IMR-90 (cell line): ENCODE measurements at regions of chr16 and their contacts with region 1.

Region 1: GRCh38 chr16:30628627-30629540 is 18.7 kb upstream of the ZNF689 start:
- DNase-seq: peak; percentile 68
- ATAC-seq: peak; percentile 99
- H3K4me3 ChIP-seq: no peak overlapping the region
- H3K27ac ChIP-seq: no peak overlapping the region
- H3K4me1 ChIP-seq: no peaks in the 10 kb centered on the region
- H3K27me3 ChIP-seq: no peaks in the 10 kb centered on the region
- CTCF ChIP-seq: peak; percentile 88
- POLR2A ChIP-seq: no peak
- RAD21 ChIP-seq: peak; percentile 83

Region 2: DNA sequence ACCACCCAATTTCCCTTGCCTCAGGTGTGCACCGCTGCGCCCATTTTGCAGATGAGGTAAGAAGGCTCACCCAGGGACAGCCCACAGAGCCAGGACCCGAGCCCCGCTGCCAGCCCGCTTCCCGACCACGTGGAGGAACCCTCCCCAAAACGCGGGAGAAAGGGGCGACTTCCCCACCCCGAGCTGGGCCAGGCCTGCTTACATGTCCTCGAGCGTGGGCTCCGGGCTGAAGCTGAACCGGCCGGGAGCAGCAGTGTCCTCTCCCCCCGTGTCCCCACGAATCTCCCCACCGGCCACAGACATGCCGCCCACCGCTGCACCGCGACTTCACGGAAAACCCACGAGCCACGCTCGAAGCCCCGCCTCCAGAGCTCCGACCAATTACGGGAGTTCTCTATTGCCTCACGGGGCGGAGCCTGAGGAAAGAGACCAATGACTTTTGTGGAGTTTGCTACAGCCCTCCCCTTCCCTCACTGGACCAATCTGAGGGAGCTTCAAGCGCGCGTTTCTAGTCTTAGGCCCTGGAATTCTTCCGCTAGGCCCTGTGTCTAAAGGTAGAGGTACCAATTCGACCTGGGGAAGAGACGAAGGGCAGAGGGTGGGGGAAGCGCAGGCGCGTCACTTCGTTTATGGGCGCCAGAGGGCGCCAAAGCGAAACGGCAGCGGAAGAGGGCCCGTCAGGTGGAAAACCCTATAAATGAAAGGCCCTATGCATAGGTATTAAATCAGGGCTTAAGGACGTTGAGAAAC is 199.0 kb before region 1 on chr16 and contains the start of gene DCTPP1:
- CTCF ChIA-PET with region 1: interaction called, 3 read pairs
- POLR2A ChIA-PET with region 1: no interaction called
- dilution Hi-C with region 1: no loop called
- in situ Hi-C with region 1: no loop called
- intact Hi-C with region 1: loop called (anchors 1 kb)
- DNase-seq: peak; percentile 98
- ATAC-seq: peak; percentile 100
- H3K4me3 ChIP-seq: peak within 1 kb of the TSS; percentile 64
- H3K27ac ChIP-seq: no peak within 1 kb of the TSS; the same call in 1 of the 2 replicates
- H3K4me1 ChIP-seq: peaks cover 3% of the 10 kb centered on the region; the same call in 1 of the 2 replicates
- H3K27me3 ChIP-seq: peaks cover 5% of the 10 kb centered on the region
- CTCF ChIP-seq: peak; percentile 79
- POLR2A ChIP-seq: no peak
- RAD21 ChIP-seq: peak; percentile 68
- total RNA-seq, gene DCTPP1: 23.3 and 24.9 TPM in 2 replicates

Region 3: DNA sequence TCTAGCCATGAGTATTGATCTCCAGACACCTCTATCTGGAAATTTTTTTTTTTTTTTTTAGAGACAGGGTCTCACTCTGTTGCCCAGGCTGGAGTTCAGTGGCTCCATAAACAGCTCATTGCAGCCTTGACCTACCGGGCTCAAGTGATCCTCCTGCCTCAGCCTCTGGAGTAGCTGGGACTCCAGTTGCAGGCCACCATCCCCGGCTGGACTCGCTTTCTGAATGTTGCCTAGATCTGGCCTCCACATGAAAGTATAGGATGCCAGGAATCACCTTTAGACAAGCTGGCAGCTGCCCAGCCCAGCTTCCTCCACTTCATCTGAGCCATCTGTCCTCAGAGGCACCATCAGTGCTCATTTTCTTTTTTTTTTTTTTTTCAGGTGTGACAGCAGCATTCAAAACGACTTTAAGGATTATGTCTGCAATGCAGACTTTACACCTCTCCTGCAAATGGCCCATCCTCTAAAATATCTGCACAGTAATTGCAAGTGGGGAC is 15.5 kb after region 1 on chr16:
- CTCF ChIA-PET with region 1: no interaction called
- POLR2A ChIA-PET with region 1: no interaction called
- dilution Hi-C with region 1: no loop called
- in situ Hi-C with region 1: no loop called
- intact Hi-C with region 1: no loop called
- DNase-seq: no peak
- ATAC-seq: no peak
- H3K4me3 ChIP-seq: no peak overlapping the region
- H3K27ac ChIP-seq: no peak overlapping the region
- H3K4me1 ChIP-seq: no peaks in the 10 kb centered on the region
- H3K27me3 ChIP-seq: peaks cover 1% of the 10 kb centered on the region; the same call in 1 of the 2 replicates
- CTCF ChIP-seq: no peak
- POLR2A ChIP-seq: no peak
- RAD21 ChIP-seq: no peak

Region 4: GRCh38 chr16:30922960-30923535 is 294.2 kb after region 1 on chr16:
- CTCF ChIA-PET with region 1: no interaction called
- POLR2A ChIA-PET with region 1: no interaction called
- dilution Hi-C with region 1: no loop called
- in situ Hi-C with region 1: no loop called
- intact Hi-C with region 1: no loop called
- DNase-seq: peak; percentile 99
- ATAC-seq: peak; percentile 79
- H3K4me3 ChIP-seq: peak overlapping the region; percentile 59
- H3K27ac ChIP-seq: peak overlapping the region; percentile 94
- H3K4me1 ChIP-seq: peaks cover 2% of the 10 kb centered on the region; the same call in 1 of the 2 replicates
- H3K27me3 ChIP-seq: no peaks in the 10 kb centered on the region
- CTCF ChIP-seq: no peak
- POLR2A ChIP-seq: peak; percentile 78
- RAD21 ChIP-seq: no peak